Activated B cell treated with CpG ODN at 0.5 μM for 24 hours (primary cell): ENCODE measurements at regions of chr2 and their contacts with region 1.

Region 1: DNA sequence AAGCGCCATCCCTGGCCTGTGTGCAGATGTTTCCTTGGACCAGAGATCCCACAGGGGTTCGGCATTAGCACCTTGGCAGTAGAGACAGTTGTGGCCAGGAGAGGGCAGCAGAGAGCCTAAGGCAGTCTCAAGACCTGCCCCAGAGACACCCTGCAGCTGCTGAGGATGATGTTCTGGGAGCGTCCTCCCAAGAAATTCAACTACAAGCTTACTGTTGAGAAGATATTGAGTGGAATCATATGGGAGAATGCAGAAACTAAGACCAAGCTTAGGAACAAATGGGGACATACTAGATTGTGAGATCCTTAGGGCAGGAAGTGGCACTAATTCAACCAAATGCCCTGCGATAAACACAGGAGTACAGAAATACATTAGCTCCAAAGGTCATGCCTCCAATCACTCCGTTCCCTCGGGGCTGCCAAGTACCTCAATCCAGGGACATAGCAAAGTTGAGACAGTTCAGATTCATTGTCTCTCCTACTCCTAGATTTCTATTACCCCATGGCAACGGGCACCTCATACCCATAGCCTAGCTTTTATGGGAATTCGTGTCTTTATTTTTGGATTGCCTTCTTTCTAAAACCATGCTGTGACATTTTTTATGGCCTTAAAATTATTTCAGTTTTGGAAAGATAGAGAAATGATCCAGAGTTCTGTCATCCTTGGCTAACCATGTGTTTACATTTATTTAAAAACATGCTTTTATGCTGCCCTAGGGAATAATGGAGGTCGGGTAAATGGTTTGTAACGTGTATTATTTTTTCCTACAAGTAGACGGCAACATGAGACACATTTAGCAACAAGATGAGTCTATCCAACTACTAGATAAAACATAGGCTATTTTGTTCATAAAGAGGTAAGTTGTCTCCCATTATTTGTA is 2.2 kb upstream of the ERMN start:
- DNase-seq: peak; percentile 71
- ATAC-seq: peak; percentile 98
- H3K4me3 Mint-ChIP-seq: peak overlapping the region; percentile 66
- H3K27ac Mint-ChIP-seq: no peak overlapping the region
- H3K4me1 Mint-ChIP-seq: peaks cover 14% of the 10 kb centered on the region
- H3K27me3 Mint-ChIP-seq: no peaks in the 10 kb centered on the region
- CTCF ChIP-seq: peak; percentile 83

Region 2: DNA sequence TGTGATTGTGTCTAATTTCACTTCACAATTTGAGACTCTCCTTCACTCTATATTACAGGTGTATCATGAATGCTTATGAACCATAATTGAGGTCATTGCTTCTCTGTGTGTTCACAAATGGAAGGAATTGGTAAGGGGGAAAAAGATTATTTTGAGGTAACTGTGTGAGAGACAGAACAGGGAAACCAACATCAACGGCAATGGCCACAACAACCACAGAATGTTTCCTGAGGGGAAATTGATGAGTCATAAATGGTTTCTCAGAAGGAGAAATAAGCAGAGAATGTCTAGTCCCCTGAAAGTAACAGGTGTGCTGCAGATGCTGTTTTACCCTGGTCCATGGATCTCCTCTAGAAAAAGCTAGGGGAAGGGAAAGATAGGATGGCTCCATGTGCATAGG is 431.6 kb before region 1 on chr2:
- CTCF ChIA-PET with region 1: no interaction called
- POLR2A ChIA-PET with region 1: no interaction called
- intact Hi-C with region 1: no loop called
- DNase-seq: no peak
- ATAC-seq: no peak
- H3K4me3 Mint-ChIP-seq: no peak overlapping the region
- H3K27ac Mint-ChIP-seq: no peak overlapping the region
- H3K4me1 Mint-ChIP-seq: no peaks in the 10 kb centered on the region
- H3K27me3 Mint-ChIP-seq: peaks cover 8% of the 10 kb centered on the region
- CTCF ChIP-seq: no peak

Region 3: GRCh38 chr2:157302492-157303099 is 25.3 kb before region 1 on chr2:
- CTCF ChIA-PET with region 1: interaction called, 73 read pairs
- POLR2A ChIA-PET with region 1: no interaction called
- intact Hi-C with region 1: no loop called
- DNase-seq: no peak
- ATAC-seq: peak; percentile 69
- H3K4me3 Mint-ChIP-seq: no peak overlapping the region
- H3K27ac Mint-ChIP-seq: no peak overlapping the region
- H3K4me1 Mint-ChIP-seq: peaks cover 6% of the 10 kb centered on the region
- H3K27me3 Mint-ChIP-seq: peaks cover 13% of the 10 kb centered on the region
- CTCF ChIP-seq: peak; percentile 53

Region 4: GRCh38 chr2:157420771-157421323 is 93.0 kb after region 1 on chr2:
- CTCF ChIA-PET with region 1: interaction called, 12 read pairs
- POLR2A ChIA-PET with region 1: interaction called, 10 read pairs
- intact Hi-C with region 1: no loop called
- DNase-seq: no peak
- ATAC-seq: peak; percentile 73
- H3K4me3 Mint-ChIP-seq: peak overlapping the region; percentile 63
- H3K27ac Mint-ChIP-seq: peak overlapping the region; percentile 90
- H3K4me1 Mint-ChIP-seq: peaks cover 58% of the 10 kb centered on the region
- H3K27me3 Mint-ChIP-seq: no peaks in the 10 kb centered on the region
- CTCF ChIP-seq: no peak

Region 5: GRCh38 chr2:157443795-157444640 is 116.2 kb after region 1 on chr2 and contains the start of gene CYTIP:
- CTCF ChIA-PET with region 1: interaction called, 36 read pairs
- POLR2A ChIA-PET with region 1: interaction called, 27 read pairs
- intact Hi-C with region 1: loop called (anchors 1 kb)
- DNase-seq: peak; percentile 52
- ATAC-seq: peak; percentile 53
- H3K4me3 Mint-ChIP-seq: peak within 1 kb of the TSS; percentile 95
- H3K27ac Mint-ChIP-seq: peak within 1 kb of the TSS; percentile 96
- H3K4me1 Mint-ChIP-seq: peaks cover 61% of the 10 kb centered on the region
- H3K27me3 Mint-ChIP-seq: no peaks in the 10 kb centered on the region
- CTCF ChIP-seq: no peak
- total RNA-seq, gene CYTIP: 129 and 130 TPM in 2 replicates

Region 6: DNA sequence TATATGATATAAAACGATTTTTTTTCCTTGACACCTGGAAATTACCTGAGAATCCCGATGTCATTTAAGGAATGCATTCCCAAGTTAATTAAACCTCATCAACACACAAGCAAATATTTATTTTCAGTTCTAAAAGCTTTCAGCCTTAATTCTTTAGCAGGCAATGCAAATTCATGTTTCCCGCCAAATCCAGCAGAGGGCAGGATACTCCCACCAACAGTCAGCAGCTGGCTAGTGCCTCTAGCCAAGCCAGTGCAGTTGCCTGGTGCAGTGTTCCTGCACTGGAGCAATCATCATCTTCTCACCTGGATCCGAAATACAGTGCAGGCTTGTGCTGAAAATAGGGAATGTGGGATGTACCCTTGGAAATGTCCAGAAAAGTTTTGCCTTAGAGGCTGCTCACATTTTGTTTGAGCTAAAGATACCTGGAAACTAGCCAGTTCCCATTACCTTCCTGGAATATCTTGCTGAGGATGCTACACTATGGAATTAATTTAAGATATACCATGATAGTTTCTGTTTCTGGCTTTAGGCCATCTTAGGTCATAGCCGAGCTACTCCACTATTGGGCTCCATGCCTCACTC is 164.4 kb after region 1 on chr2:
- CTCF ChIA-PET with region 1: interaction called, 114 read pairs
- POLR2A ChIA-PET with region 1: interaction called, 3 read pairs
- intact Hi-C with region 1: loop called (anchors 1 kb)
- DNase-seq: peak; percentile 36
- ATAC-seq: peak; percentile 99
- H3K4me3 Mint-ChIP-seq: no peak overlapping the region
- H3K27ac Mint-ChIP-seq: peak overlapping the region; percentile 50
- H3K4me1 Mint-ChIP-seq: peaks cover 20% of the 10 kb centered on the region
- H3K27me3 Mint-ChIP-seq: no peaks in the 10 kb centered on the region
- CTCF ChIP-seq: peak; percentile 58

Region 7: GRCh38 chr2:157596992-157597681 is 269.3 kb after region 1 on chr2:
- CTCF ChIA-PET with region 1: interaction called, 70 read pairs
- POLR2A ChIA-PET with region 1: no interaction called
- intact Hi-C with region 1: loop called (anchors 1 kb)
- DNase-seq: peak; percentile 42
- ATAC-seq: peak; percentile 80
- H3K4me3 Mint-ChIP-seq: peak overlapping the region; percentile 41
- H3K27ac Mint-ChIP-seq: no peak overlapping the region
- H3K4me1 Mint-ChIP-seq: peaks cover 8% of the 10 kb centered on the region
- H3K27me3 Mint-ChIP-seq: peaks cover 3% of the 10 kb centered on the region
- CTCF ChIP-seq: no peak

Region 8: GRCh38 chr2:158006961-158007719 is 679.3 kb after region 1 on chr2:
- CTCF ChIA-PET with region 1: interaction called, 6 read pairs
- POLR2A ChIA-PET with region 1: no interaction called
- intact Hi-C with region 1: loop called (anchors 1 kb)
- DNase-seq: no peak
- ATAC-seq: no peak
- H3K4me3 Mint-ChIP-seq: no peak overlapping the region
- H3K27ac Mint-ChIP-seq: no peak overlapping the region
- H3K4me1 Mint-ChIP-seq: peaks cover 5% of the 10 kb centered on the region
- H3K27me3 Mint-ChIP-seq: peaks cover 5% of the 10 kb centered on the region
- CTCF ChIP-seq: no peak